Adrenal gland (tissue), 19 donors: ENCODE measurements at regions of chr17 and their contacts with region 1.

Region 1: GRCh38 chr17:28112220-28113005 is 69.9 kb downstream of the NLK start:
- DNase-seq: peak in 1 of 7 donors; percentile 12
- H3K4me3 ChIP-seq: no peak overlapping the region
- H3K27ac ChIP-seq: peak overlapping the region in 2 of 5 donors; percentile 39 to 50
- H3K4me1 ChIP-seq: peaks cover 20 to 30% of the 10 kb centered on the region in 2 donors
- H3K27me3 ChIP-seq: no peaks in the 10 kb centered on the region
- CTCF ChIP-seq: no peak
- POLR2A ChIP-seq: no peak

Region 2: GRCh38 chr17:27919079-27919478 is 193.3 kb before region 1 on chr17:
- intact Hi-C with region 1: no loop called
- DNase-seq: peak; percentile 64 to 84 (median 82)
- H3K4me3 ChIP-seq: no peak overlapping the region
- H3K27ac ChIP-seq: peak overlapping the region in 3 of 5 donors; percentile 3 to 57 (median 44)
- H3K4me1 ChIP-seq: peaks cover 0 to 25% of the 10 kb centered on the region in 2 donors
- H3K27me3 ChIP-seq: no peaks in the 10 kb centered on the region
- CTCF ChIP-seq: peak in 4 of 6 experiments; percentile 15 to 26 (median 20)
- POLR2A ChIP-seq: no peak

Region 3: DNA sequence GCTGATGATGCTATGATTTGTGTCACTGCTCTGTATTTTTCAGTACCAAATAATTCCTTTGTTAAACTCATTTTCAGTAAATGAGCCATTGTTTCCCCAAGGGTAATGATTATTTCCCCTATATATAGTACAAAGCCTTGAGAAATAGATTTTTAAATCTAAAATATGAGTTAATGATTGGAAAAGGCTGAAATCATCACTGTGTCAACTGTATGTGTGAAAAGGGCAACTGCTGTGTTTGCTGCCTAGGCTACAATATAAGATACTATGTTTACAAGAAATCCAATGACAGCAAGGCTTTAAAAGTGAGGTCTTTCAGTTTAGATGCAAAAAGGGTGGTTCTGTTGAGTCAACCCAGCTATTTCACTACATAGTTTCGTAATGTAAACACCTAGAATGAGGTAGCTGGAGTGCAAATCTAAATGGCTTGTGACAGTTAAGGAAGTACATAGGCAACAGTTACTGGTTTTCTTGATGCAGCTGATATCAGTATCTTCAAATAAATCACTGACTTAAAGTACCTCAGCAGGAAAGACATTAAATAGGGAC is 54.6 kb before region 1 on chr17:
- intact Hi-C with region 1: loop called in 1 of 2 experiments (anchors 10 kb)
- DNase-seq: no peak
- H3K4me3 ChIP-seq: no peak overlapping the region
- H3K27ac ChIP-seq: peak overlapping the region in 2 of 5 donors; percentile 1 to 15
- H3K4me1 ChIP-seq: peaks cover 19 to 76% of the 10 kb centered on the region in 2 donors
- H3K27me3 ChIP-seq: no peaks in the 10 kb centered on the region
- CTCF ChIP-seq: no peak
- POLR2A ChIP-seq: no peak